MCF 10A (cell line): ENCODE measurements at regions of chr15 and their contacts with region 1.

Region 1: GRCh38 chr15:46312133-46312740 is 677.4 kb downstream of the SQOR start:
- DNase-seq: peak; percentile 47
- H3K4me3 Mint-ChIP-seq: no peak overlapping the region
- H3K27ac Mint-ChIP-seq: no peak overlapping the region
- H3K4me1 Mint-ChIP-seq: no peaks in the 10 kb centered on the region
- H3K27me3 Mint-ChIP-seq: no peaks in the 10 kb centered on the region
- CTCF ChIP-seq: peak; percentile 82

Region 2: DNA sequence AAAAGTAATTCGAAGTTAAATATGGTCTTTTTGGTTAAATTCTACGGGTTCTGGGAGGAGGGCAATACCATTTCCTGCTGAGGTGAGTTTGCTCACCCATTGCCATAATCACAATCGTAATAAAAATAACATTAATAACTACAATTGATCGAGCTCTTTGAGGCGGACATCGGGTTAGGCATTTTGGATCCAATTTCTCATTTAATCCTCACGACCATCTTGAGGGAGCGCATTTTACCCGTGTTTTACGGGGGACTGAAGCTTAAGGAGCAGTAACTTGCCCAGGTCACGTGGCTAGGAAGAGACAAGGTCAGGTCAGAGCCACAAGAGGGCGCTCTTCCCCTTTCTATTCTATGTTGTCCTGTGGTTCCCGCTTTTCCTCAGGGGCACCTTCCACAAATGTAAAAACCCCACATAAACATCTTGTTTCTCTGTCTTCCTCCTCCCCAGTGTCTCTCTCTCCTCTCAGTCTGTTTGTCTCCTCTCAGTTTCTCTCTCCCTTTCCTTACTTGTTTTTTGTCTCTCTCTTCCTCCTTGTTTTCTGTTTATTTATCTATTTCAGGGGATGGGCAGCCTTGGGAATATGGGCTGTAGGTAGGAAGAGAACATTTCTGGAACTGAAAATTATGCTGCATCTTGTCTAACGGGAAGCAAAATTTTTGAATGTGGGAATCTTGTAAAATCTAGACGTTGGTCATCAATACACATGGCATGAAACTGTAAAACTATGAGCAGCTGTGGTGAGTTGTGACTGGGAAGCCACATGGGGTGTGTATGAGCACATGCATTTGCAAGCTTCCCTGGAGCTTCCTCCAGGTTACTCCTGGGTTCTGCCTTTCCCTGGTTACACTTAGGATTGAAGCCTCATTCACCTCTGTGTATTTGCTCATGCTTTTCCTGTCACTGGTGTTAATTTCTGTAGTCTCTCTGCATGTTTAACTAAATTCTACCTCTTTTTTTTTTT is 606.4 kb before region 1 on chr15:
- CTCF ChIA-PET with region 1: interaction called, 5 read pairs
- POLR2A ChIA-PET with region 1: no interaction called
- intact Hi-C with region 1: loop called (anchors 5 kb)
- DNase-seq: peak; percentile 86
- H3K4me3 Mint-ChIP-seq: peak overlapping the region; percentile 87
- H3K27ac Mint-ChIP-seq: peak overlapping the region; percentile 79
- H3K4me1 Mint-ChIP-seq: peaks cover 22% of the 10 kb centered on the region
- H3K27me3 Mint-ChIP-seq: no peaks in the 10 kb centered on the region
- CTCF ChIP-seq: peak; percentile 79

Region 3: GRCh38 chr15:46091860-46092450 is 220.3 kb before region 1 on chr15:
- CTCF ChIA-PET with region 1: interaction called, 5 read pairs
- POLR2A ChIA-PET with region 1: no interaction called
- intact Hi-C with region 1: loop called (anchors 5 kb)
- DNase-seq: peak; percentile 16
- H3K4me3 Mint-ChIP-seq: no peak overlapping the region
- H3K27ac Mint-ChIP-seq: no peak overlapping the region
- H3K4me1 Mint-ChIP-seq: no peaks in the 10 kb centered on the region
- H3K27me3 Mint-ChIP-seq: no peaks in the 10 kb centered on the region
- CTCF ChIP-seq: peak; percentile 67

Region 4: GRCh38 chr15:46413799-46414198 is 101.6 kb after region 1 on chr15:
- CTCF ChIA-PET with region 1: no interaction called
- POLR2A ChIA-PET with region 1: no interaction called
- intact Hi-C with region 1: no loop called
- DNase-seq: no peak
- H3K4me3 Mint-ChIP-seq: no peak overlapping the region
- H3K27ac Mint-ChIP-seq: no peak overlapping the region
- H3K4me1 Mint-ChIP-seq: peaks cover 13% of the 10 kb centered on the region
- H3K27me3 Mint-ChIP-seq: no peaks in the 10 kb centered on the region
- CTCF ChIP-seq: no peak

Region 5: DNA sequence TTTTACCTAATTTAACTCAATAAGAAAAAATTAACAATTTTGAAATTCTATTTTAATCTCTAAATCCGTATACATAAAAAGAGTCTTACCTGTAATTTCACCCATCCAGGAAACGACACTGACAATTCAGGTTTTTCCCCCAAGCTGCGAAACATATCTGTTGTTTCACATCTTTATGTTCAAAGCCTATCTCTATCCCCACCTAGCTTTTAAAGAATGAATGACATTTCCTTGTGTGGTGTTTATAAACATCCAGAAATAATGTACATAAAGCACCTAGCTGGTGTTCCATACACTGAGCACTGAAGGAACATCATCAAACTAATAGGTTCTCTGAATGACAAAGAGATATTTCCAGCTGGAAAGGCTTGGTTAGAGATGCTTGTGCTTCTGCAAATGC is 190.4 kb after region 1 on chr15:
- CTCF ChIA-PET with region 1: interaction called, 20 read pairs
- POLR2A ChIA-PET with region 1: no interaction called
- intact Hi-C with region 1: loop called (anchors 1 kb)
- DNase-seq: no peak
- H3K4me3 Mint-ChIP-seq: no peak overlapping the region
- H3K27ac Mint-ChIP-seq: no peak overlapping the region
- H3K4me1 Mint-ChIP-seq: peaks cover 4% of the 10 kb centered on the region
- H3K27me3 Mint-ChIP-seq: no peaks in the 10 kb centered on the region
- CTCF ChIP-seq: peak; percentile 42

Region 6: GRCh38 chr15:46918462-46919135 is 606.4 kb after region 1 on chr15:
- CTCF ChIA-PET with region 1: interaction called, 9 read pairs
- POLR2A ChIA-PET with region 1: no interaction called
- intact Hi-C with region 1: loop called (anchors 1 kb)
- DNase-seq: no peak
- H3K4me3 Mint-ChIP-seq: no peak overlapping the region
- H3K27ac Mint-ChIP-seq: no peak overlapping the region
- H3K4me1 Mint-ChIP-seq: no peaks in the 10 kb centered on the region
- H3K27me3 Mint-ChIP-seq: no peaks in the 10 kb centered on the region
- CTCF ChIP-seq: no peak

Region 7: DNA sequence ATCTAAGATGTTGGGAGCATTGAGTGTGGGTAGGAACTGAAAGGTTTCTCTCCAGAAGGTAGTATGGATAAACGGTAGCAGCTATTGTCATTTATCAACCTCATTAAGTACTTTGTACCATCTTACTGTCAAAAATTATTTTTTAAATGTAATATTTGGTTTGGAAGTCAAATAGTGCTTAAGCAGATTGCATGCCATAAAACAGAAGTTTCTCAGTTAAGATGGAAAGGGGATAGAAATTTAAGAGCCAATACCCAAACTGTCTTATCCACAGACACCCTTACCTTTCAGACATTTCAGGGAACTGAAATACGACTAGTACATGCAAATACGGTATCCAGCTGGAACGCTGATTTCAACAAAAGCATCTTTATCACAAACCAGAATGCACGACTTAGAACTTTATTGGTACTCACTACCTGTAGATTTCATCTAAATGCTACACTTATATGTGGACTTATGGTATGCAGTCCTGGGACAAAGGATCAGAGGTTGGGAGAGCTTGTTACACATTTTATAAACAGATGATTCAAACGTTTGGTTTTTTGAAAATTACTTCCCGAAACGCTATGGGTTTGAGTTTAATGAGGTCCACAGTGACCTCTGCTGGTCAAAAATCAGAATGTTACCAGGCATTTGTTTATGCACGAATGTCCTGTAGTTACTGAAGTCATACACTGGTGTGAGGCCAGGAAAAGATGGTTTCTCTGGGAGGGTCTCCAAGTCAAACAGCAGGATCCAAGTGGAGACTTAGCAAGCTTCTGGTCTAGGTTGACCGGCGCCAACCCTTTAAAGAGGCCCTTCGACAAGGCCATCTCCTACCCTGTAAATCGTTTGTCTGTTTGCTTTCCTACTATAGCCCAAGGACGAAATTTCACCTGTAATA is 1973.3 kb after region 1 on chr15:
- CTCF ChIA-PET with region 1: interaction called, 5 read pairs
- POLR2A ChIA-PET with region 1: no interaction called
- intact Hi-C with region 1: loop called (anchors 2 kb)
- DNase-seq: peak; percentile 77
- H3K4me3 Mint-ChIP-seq: peak overlapping the region; percentile 58
- H3K27ac Mint-ChIP-seq: peak overlapping the region; percentile 31
- H3K4me1 Mint-ChIP-seq: no peaks in the 10 kb centered on the region
- H3K27me3 Mint-ChIP-seq: no peaks in the 10 kb centered on the region
- CTCF ChIP-seq: peak; percentile 53